ENCODE measurements at regions of chr17 and their contacts with region 1.

Region 1: GRCh38 chr17:7509937-7510336 is 25.8 kb downstream of the POLR2A start:
- DNase-seq: no peak
- ATAC-seq: peak in 1 of 8 donors; percentile 24
- H3K4me3 ChIP-seq: no peak overlapping the region
- H3K27ac ChIP-seq: no peak overlapping the region
- H3K4me1 ChIP-seq: peaks cover 0 to 7% (median 0%) of the 10 kb centered on the region in 9 donors
- H3K27me3 ChIP-seq: no peaks in the 10 kb centered on the region
- CTCF ChIP-seq: no peak

Region 2: GRCh38 chr17:6924208-6924607 is 585.7 kb before region 1 on chr17:
- intact Hi-C with region 1: loop called in 1 of 10 experiments (anchors 5 kb)
- DNase-seq: no peak
- ATAC-seq: no peak
- H3K4me3 ChIP-seq: no peak overlapping the region
- H3K27ac ChIP-seq: no peak overlapping the region
- H3K4me1 ChIP-seq: peaks cover 0 to 10% (median 0%) of the 10 kb centered on the region in 9 donors
- H3K27me3 ChIP-seq: peaks cover 0 to 5% (median 0%) of the 10 kb centered on the region in 7 donors
- CTCF ChIP-seq: no peak

Measured in heart right ventricle (tissue), 16 donors.